ENCODE measurements at regions of chr3 and their contacts with region 1.

Region 1: GRCh38 chr3:196665962-196666867 is 26.7 kb downstream of the NRROS start:
- DNase-seq: no peak

Region 2: DNA sequence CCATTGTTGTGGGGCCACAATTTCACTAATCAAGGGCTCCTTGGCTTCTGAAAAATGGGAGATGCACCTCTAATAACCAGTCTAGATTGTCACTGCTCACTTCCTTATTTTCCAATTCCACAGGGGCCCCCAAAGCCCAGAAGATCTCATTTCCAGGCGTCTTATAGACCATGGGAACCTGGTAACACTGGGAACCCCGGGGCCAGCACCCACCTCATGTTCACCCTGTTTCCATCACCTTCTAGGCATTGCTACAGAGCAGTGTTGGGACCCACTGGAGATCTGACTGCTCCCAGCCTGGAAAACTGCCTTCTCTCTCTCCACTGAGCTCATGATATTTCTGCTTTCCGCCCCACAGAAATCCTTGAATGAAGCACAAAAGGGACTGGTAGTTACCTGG is 645.8 kb before region 1 on chr3:
- intact Hi-C with region 1: loop called in 1 of 2 experiments (anchors 5 kb)
- DNase-seq: no peak

Region 3: GRCh38 chr3:196883361-196883760 is 217.1 kb after region 1 on chr3:
- intact Hi-C with region 1: no loop called
- DNase-seq: no peak

Measured in posterior vena cava (tissue), 2 donors.